ENCODE measurements at regions of chr18 and their contacts with region 1.

Region 1: DNA sequence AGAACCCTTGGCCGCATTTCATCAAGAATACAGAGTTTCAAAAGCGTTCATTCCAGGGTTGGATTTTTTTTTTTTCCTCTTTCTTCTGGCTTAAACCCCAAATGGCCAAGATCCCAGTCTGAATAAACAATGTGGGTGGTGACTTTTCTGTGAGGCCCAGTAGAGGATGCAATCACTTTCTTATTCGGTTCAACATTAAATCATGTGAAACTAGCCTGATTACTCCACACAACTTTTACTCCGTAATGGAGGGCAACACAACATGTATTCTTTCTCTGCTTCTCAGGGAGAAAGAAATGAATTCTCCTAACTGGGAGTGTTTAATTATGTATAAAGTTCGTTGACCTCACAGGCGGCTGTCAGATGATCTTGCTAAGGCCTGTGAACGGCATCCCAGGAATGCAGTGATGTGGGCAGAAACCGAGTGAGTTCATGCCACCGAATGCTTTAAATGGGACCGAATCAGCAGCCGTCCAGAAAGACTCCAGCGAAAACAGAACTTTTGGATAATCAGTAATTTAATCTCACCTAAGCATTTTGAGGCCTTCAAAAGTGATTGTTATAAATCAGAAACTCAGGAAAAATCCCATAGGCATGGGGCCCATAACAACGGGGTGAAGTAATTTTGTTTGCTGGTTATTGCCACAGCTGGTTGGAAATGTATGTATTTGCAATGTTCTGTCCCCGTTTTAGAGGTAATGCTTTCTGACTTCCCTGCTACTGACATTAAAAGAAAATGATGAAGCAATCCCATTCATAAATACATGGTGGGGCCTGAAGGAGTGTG is 81.5 kb downstream of the BCL2 start:
- DNase-seq: peak in 1 of 2 donors; percentile 70
- ATAC-seq: peak; percentile 88
- H3K4me3 ChIP-seq: peak overlapping the region in 1 of 2 donors; percentile 49
- H3K27ac ChIP-seq: peak overlapping the region; percentile 85 to 100
- H3K4me1 ChIP-seq: peaks cover 5 to 8% of the 10 kb centered on the region in 2 donors
- H3K27me3 ChIP-seq: no peaks in the 10 kb centered on the region

Region 2: GRCh38 chr18:62938487-62938886 is 299.6 kb before region 1 on chr18:
- intact Hi-C with region 1: no loop called
- DNase-seq: no peak
- ATAC-seq: no peak
- H3K4me3 ChIP-seq: no peak overlapping the region
- H3K27ac ChIP-seq: peak overlapping the region in 1 of 2 donors; percentile 57
- H3K4me1 ChIP-seq: no peaks in the 10 kb centered on the region
- H3K27me3 ChIP-seq: no peaks in the 10 kb centered on the region

Region 3: DNA sequence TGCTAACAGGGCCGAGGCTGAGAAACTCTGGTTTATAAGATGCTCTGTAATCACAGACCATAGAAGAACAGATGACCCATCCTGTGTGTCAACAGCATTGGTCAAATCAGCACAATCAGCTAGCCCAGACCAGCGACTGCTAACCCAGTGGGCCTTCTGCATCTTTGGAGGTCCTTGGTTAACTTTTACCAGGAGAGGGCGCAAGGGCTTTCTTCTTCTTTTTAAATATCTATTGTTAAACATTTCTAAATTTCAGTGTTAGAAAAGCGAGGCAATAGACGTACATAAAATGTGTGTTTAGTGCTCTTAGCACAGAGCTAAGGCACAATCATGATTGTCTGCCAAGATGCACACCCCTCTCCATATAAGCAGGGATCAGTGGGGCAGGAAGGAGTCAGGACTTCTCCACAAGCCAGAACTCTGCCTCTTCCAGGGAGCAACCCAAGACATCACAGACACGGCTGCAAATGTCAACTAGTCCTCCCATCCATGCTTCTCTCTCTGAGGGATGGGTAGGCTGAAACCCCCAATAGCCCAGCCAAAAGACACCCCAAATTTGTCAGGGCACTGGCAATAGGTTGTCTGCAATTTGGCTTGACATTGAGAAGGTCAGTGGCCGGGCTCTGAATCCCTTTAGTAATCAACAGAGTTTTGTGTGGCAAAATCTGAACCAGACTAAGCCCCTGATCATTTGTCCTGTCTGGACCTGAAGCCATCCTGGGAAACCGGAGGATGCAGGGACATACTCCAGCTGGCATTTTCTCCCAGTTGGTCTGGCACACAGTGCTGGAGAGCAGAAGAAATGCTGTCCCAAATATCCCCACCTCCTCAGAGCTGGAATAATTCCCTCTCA is 106.7 kb before region 1 on chr18:
- intact Hi-C with region 1: loop called in 1 of 2 experiments (anchors 5 kb)
- DNase-seq: no peak
- ATAC-seq: peak; percentile 67
- H3K4me3 ChIP-seq: no peak overlapping the region
- H3K27ac ChIP-seq: peak overlapping the region; percentile 33
- H3K4me1 ChIP-seq: no peaks in the 10 kb centered on the region
- H3K27me3 ChIP-seq: no peaks in the 10 kb centered on the region

Region 4: DNA sequence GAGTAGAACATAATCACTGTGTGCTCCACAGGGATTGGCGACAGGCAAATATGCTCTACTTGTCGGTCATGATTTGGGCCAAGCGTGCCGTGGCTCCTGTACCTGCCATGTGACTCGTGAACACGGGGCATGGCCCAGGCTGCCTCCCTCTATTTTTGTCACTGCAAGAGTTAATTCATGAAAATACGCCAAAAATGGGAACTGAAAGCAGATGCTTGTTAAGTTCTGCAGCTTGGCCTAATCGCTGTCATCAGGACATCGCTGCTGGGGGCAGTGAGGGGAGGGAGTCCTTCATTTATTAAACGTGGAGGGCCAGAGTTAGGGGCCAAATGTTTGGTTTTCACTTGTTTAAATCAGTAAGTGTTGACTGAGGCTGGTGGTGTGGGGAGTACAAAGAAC is 96.3 kb before region 1 on chr18:
- intact Hi-C with region 1: loop called (anchors 5 kb)
- DNase-seq: no peak
- ATAC-seq: no peak
- H3K4me3 ChIP-seq: no peak overlapping the region
- H3K27ac ChIP-seq: no peak overlapping the region
- H3K4me1 ChIP-seq: peaks cover 0 to 3% of the 10 kb centered on the region in 2 donors
- H3K27me3 ChIP-seq: no peaks in the 10 kb centered on the region

Region 5: DNA sequence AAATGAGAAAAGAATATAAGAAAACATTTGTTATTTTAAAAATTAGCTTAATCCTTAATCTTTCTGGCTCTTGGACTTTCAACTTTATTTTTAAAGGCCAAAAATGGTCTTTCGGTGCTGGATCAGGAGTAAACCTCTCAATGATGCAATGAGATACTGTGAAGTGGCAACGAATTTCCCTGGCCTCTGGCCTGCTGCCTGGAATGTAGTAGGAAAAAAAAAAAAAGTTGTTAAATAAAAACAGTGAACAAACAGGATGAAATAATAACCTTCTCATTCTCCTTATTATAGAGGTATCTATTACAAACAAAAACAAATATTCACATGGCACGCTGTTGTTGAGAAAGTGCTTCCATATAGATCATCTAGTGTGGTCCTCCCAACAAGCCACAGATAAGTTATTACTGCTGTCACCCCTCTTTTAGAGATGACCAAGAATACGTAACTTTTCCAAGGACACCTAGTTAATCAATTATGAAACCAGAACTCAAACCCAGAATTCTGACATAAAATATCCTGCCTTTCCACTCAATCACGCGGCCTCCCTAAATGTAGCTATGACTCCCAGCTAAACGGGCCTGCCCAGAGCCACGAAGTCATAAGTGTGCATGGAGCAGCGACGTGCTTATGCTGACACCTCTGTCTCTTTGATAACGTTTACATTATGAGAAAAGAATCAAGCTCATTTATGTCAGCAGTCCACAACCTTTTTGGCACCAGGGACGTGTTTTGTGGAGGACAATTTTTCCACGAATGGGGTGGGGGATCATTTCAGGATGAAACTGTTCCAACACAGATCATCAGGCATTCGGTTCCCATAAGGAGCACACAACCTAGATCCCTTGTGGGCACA is 89.4 kb before region 1 on chr18:
- intact Hi-C with region 1: loop called (anchors 5 kb)
- DNase-seq: no peak
- ATAC-seq: peak; percentile 33
- H3K4me3 ChIP-seq: no peak overlapping the region
- H3K27ac ChIP-seq: no peak overlapping the region
- H3K4me1 ChIP-seq: peaks cover 1 to 6% of the 10 kb centered on the region in 2 donors
- H3K27me3 ChIP-seq: no peaks in the 10 kb centered on the region

Region 6: GRCh38 chr18:63155169-63155852 is 82.8 kb before region 1 on chr18:
- intact Hi-C with region 1: loop called in 1 of 2 experiments (anchors 5 kb)
- DNase-seq: peak; percentile 75 to 79
- ATAC-seq: peak; percentile 70
- H3K4me3 ChIP-seq: no peak overlapping the region
- H3K27ac ChIP-seq: no peak overlapping the region
- H3K4me1 ChIP-seq: peaks cover 8 to 12% of the 10 kb centered on the region in 2 donors
- H3K27me3 ChIP-seq: no peaks in the 10 kb centered on the region

Region 7: GRCh38 chr18:63177919-63178821 is 59.9 kb before region 1 on chr18:
- intact Hi-C with region 1: loop called in 1 of 2 experiments (anchors 10 kb)
- DNase-seq: no peak
- ATAC-seq: peak; percentile 62
- H3K4me3 ChIP-seq: no peak overlapping the region
- H3K27ac ChIP-seq: no peak overlapping the region
- H3K4me1 ChIP-seq: peaks cover 0 to 10% of the 10 kb centered on the region in 2 donors
- H3K27me3 ChIP-seq: no peaks in the 10 kb centered on the region

Region 8: DNA sequence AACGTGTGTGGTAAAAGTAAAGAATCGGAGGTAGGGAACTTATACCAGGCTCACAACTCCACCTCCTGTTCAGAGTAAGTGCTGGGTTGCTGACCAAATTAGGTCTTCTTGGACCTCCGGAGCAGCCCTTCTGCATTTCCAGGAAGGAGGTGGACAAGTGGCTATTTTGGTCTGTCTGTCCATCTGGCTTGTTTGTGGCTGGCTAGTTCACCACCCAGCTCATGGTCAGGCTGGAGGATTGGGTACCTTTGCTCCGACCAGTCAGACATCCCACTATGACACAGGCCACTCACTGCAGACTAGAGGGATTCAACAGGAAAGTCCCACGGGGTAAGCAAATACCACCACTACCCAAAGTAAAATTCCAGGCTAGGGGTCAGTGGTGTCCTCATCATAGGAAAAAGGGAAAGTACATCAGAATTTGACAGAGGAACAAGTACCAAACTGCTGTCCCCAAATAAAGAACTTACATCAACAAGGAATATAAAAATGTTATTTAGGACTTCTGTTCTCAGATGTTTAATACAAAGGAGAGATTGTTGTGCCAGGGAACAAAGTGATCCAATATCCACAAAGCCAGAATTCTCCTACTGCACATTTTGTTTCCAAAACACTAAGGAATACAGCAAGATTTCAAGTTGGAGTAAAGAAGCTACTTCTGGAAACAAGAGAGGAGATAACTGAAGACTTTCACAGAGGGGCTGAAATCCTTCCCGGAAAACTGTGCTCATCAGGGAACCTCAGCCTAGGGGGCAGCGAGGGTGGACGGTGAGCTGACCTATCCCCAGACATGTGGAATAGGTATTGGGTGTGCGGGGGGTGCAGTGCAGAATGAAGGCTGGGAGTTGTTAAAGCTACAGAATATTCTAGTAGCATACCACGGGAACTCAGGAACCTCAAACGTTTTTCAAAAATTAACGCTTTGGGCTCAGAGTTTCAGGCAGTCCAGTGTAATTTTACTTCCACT is 24.6 kb after region 1 on chr18:
- intact Hi-C with region 1: loop called in 1 of 2 experiments (anchors 2 kb)
- DNase-seq: peak; percentile 71 to 72
- ATAC-seq: peak; percentile 90
- H3K4me3 ChIP-seq: no peak overlapping the region
- H3K27ac ChIP-seq: peak overlapping the region; percentile 72 to 94
- H3K4me1 ChIP-seq: no peaks in the 10 kb centered on the region
- H3K27me3 ChIP-seq: no peaks in the 10 kb centered on the region

Measured in aorta (tissue), 5 donors.